Left ventricle myocardium superior (tissue), 1 donor: ENCODE measurements at regions of chr9 and their contacts with region 1.

Region 1: GRCh38 chr9:80885894-80886293 is 803.5 kb downstream of the TLE1 start:
- DNase-seq: peak; percentile 29
- ATAC-seq: peak; percentile 48

Region 2: DNA sequence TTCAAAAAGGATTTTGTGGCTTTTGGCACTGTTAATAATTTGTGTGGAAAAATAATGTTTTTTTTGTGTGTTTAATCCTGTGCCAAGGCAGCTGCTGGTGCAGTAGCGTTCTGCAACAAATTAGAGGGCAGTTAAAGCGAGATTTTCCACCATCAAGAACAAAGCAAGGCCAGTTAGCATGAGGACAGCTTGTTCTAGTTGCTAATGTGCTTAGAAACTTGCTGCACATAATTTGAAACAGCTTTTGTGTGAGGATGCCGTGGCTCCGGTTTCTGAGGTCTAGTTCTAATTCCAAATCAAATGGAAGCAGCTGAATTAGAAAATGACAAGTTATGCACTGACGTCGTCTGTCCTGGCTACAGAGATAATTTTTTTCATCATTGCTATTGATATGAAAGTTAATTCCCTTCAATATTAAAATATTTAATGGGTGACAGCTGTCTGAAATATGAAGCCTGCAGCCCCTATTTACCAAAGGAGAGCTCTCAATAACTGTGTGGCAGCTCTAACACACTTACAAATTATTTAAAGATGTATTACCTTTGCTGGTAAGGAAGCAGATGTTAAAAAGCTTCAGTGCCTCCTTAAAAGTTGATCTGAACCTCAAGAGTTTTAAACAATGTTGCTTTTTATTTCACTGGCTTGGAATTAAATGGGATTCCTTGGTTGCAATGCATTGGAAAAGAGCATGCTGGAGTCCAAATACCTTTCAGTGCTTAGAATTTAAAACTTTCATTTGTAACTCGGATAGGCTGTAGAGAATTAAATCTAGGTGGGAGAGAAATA is 1231.3 kb after region 1 on chr9:
- intact Hi-C with region 1: loop called (anchors 10 kb)
- DNase-seq: no peak
- ATAC-seq: peak; percentile 81